Mammary epithelial cell (primary cell): ENCODE measurements at regions of chr15 and their contacts with region 1.

Region 1: GRCh38 chr15:101641166-101641764 is 10.9 kb downstream of the TM2D3 start:
- DNase-seq: peak; percentile 44
- H3K4me3 ChIP-seq: no peak overlapping the region
- H3K27ac ChIP-seq: no peak overlapping the region
- H3K4me1 ChIP-seq: peaks cover 12% of the 10 kb centered on the region
- H3K27me3 ChIP-seq: no peaks in the 10 kb centered on the region
- CTCF ChIP-seq: peak; percentile 88 to 95

Region 2: GRCh38 chr15:101014921-101015841 is 626.1 kb before region 1 on chr15:
- CTCF ChIA-PET with region 1: no interaction called
- dilution Hi-C with region 1: no loop called
- in situ Hi-C with region 1: no loop called
- intact Hi-C with region 1: loop called (anchors 5 kb)
- DNase-seq: peak; percentile 52
- H3K4me3 ChIP-seq: no peak overlapping the region
- H3K27ac ChIP-seq: no peak overlapping the region
- H3K4me1 ChIP-seq: no peaks in the 10 kb centered on the region
- H3K27me3 ChIP-seq: no peaks in the 10 kb centered on the region
- CTCF ChIP-seq: peak; percentile 95 to 96

Region 3: GRCh38 chr15:101288908-101289513 is 352.3 kb before region 1 on chr15:
- CTCF ChIA-PET with region 1: interaction called, 5 read pairs
- dilution Hi-C with region 1: no loop called
- in situ Hi-C with region 1: loop called in 1 of 2 experiments (anchors 5 kb)
- intact Hi-C with region 1: loop called (anchors 1 kb)
- DNase-seq: peak; percentile 37
- H3K4me3 ChIP-seq: no peak overlapping the region
- H3K27ac ChIP-seq: no peak overlapping the region
- H3K4me1 ChIP-seq: peaks cover 10% of the 10 kb centered on the region
- H3K27me3 ChIP-seq: no peaks in the 10 kb centered on the region
- CTCF ChIP-seq: peak; percentile 62 to 67

Region 4: DNA sequence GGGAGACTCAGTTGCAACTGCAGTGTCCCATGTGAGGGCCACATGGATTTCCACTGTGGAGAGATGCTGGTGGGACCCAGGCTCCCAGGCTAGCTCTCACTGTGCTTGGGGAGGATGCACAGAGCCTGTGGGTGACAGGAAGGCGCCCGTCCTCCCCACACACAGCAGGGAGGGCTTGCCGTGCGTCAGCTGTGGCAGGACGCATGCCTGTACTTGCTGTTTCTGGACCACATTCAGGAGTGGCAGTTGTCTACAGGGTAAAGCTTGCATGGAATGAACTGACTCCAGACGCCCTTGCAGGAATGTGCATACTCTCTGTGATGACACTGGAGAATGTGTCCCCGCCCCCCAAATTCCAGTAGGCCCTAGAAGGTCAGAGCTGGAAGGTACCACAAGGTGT is 282.4 kb before region 1 on chr15:
- CTCF ChIA-PET with region 1: no interaction called
- dilution Hi-C with region 1: no loop called
- in situ Hi-C with region 1: no loop called
- intact Hi-C with region 1: loop called (anchors 2 kb)
- DNase-seq: peak; percentile 94
- H3K4me3 ChIP-seq: no peak overlapping the region
- H3K27ac ChIP-seq: peak overlapping the region; percentile 58
- H3K4me1 ChIP-seq: peaks cover 50% of the 10 kb centered on the region
- H3K27me3 ChIP-seq: no peaks in the 10 kb centered on the region
- CTCF ChIP-seq: no peak

Region 5: DNA sequence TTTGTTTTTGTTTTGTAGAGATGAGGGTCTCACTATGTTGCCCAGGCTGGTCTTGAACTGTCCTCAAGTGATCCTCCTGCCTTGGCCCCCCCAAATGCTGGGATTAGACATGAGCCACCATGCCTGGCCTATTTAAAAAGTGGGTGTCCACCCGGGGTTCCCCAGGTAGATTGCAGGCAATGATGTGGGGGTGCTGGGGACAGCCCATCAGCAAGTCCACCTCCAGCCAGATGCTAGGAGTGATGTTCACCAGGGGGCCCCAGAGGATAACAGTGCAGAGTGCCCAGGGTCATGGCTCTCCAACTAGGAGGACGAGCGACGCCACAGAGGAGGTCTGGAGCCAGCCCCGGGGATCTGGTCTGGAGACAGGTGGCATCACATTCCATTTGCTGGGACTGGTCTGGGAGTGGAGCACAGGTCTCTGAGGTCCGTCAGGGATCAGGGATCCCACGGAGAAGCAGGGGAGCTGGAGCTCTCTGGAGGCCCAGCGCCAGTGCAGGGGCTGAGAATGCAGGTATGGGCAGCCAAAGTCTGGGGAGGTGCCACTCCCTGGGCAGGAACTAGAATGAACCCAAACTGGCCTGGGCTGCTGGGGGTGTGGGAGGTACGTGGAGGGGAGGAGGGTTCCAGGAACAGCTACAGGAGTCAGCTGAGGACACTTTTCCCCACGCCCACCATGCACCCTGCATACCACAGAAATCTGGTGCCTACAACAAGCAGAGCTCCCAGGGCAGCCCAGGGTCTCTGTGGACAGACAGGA is 100.6 kb before region 1 on chr15:
- CTCF ChIA-PET with region 1: no interaction called
- dilution Hi-C with region 1: no loop called
- in situ Hi-C with region 1: no loop called
- intact Hi-C with region 1: loop called (anchors 2 kb)
- DNase-seq: no peak
- H3K4me3 ChIP-seq: no peak overlapping the region
- H3K27ac ChIP-seq: no peak overlapping the region
- H3K4me1 ChIP-seq: no peaks in the 10 kb centered on the region
- H3K27me3 ChIP-seq: peaks cover 3% of the 10 kb centered on the region
- CTCF ChIP-seq: no peak

Region 6: DNA sequence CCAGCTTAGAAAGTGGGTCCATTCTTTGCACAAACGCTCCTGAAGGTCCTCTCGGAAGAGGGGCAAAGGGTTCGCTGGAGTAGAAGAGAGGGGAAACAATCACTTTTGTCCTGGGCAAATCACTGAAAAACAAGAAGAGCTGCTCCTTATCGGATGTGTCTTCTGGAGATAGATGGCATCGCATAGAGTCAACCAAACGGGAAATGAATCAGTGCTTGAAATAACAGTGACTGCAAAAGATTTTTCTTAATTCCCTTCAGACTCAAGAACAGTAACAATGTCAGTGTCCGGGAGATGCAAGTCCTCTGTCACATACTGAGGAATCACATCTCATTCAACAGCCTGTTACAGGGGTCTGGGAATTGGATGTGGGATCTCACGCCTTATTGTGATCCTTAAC is 73.0 kb before region 1 on chr15:
- CTCF ChIA-PET with region 1: no interaction called
- dilution Hi-C with region 1: no loop called
- in situ Hi-C with region 1: no loop called
- intact Hi-C with region 1: no loop called
- DNase-seq: no peak
- H3K4me3 ChIP-seq: no peak overlapping the region
- H3K27ac ChIP-seq: no peak overlapping the region
- H3K4me1 ChIP-seq: no peaks in the 10 kb centered on the region
- H3K27me3 ChIP-seq: no peaks in the 10 kb centered on the region
- CTCF ChIP-seq: no peak

Region 7: DNA sequence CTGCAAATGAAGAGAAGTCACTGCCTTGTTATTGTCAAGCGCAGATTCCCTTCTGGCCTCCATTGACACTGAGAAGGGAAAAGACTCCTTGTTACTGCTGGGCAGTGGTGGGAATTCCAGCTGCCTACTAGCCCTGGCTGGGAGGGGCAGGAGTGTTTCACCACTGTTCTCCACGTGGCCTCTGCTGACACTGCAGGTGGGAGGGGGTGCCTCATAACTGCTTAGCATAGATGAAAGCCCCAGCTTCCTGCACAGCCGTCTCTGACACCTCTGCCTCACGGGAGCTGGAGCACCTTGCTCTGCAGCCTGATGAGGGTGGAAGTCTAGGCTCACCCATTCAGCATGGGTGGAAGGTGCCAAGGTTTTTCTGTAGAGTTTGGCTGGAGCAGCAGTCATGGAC is 41.2 kb before region 1 on chr15:
- CTCF ChIA-PET with region 1: no interaction called
- dilution Hi-C with region 1: no loop called
- in situ Hi-C with region 1: no loop called
- intact Hi-C with region 1: no loop called
- DNase-seq: no peak
- H3K4me3 ChIP-seq: no peak overlapping the region
- H3K27ac ChIP-seq: no peak overlapping the region
- H3K4me1 ChIP-seq: no peaks in the 10 kb centered on the region
- H3K27me3 ChIP-seq: peaks cover 3% of the 10 kb centered on the region
- CTCF ChIP-seq: no peak